ENCODE measurements at regions of chr14 and their contacts with region 1.

Region 1: GRCh38 chr14:51807356-51807755 is 53.1 kb upstream of the GNG2 start:
- DNase-seq: no peak
- H3K4me3 ChIP-seq: no peak overlapping the region
- H3K27ac ChIP-seq: no peak overlapping the region
- H3K4me1 ChIP-seq: peaks cover 1% of the 10 kb centered on the region
- H3K27me3 ChIP-seq: no peaks in the 10 kb centered on the region
- CTCF ChIP-seq: no peak
- EP300 ChIP-seq: no peak
- POLR2A ChIP-seq: no peak

Region 2: GRCh38 chr14:50974118-50974517 is 833.2 kb before region 1 on chr14:
- intact Hi-C with region 1: loop called in 1 of 4 experiments (anchors 5 kb)
- DNase-seq: no peak
- H3K4me3 ChIP-seq: no peak overlapping the region
- H3K27ac ChIP-seq: no peak overlapping the region
- H3K4me1 ChIP-seq: no peaks in the 10 kb centered on the region
- H3K27me3 ChIP-seq: no peaks in the 10 kb centered on the region
- CTCF ChIP-seq: no peak
- EP300 ChIP-seq: no peak
- POLR2A ChIP-seq: no peak

Region 3: GRCh38 chr14:51691176-51691575 is 116.2 kb before region 1 on chr14:
- intact Hi-C with region 1: no loop called
- DNase-seq: no peak
- H3K4me3 ChIP-seq: no peak overlapping the region
- H3K27ac ChIP-seq: no peak overlapping the region
- H3K4me1 ChIP-seq: no peaks in the 10 kb centered on the region
- H3K27me3 ChIP-seq: no peaks in the 10 kb centered on the region
- CTCF ChIP-seq: no peak
- EP300 ChIP-seq: no peak
- POLR2A ChIP-seq: no peak